ENCODE measurements at regions of chr21 and their contacts with region 1.

Region 1: DNA sequence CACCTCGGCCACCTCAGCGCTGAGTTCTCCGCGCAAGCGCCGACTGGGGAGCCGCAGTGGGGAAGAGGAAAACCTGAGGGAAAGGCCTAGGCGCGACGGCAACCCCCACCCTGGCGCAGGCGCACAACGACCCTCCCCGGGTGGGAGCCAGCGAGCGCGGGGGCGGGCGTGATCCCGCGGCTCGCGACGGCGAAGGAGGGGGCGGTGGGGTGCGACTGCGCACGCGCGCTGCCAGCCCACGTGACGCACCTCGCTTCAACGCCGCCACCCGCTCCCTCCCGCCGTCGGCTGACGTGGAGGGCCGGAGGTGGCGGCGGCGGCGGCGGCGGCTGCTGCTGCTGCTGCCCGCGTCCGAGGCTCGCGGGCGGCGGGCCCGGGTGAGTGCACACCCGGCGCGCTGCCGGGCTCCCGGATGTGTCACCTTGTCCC is at the starts of genes PIGP and TTC3:
- DNase-seq: peak; percentile 89 to 99 (median 95)
- ATAC-seq: peak; percentile 62
- H3K4me3 ChIP-seq: peak within 1 kb of the TSS; percentile 86 to 94
- H3K4me3 Mint-ChIP-seq: peak within 1 kb of the TSS; percentile 99
- H3K27ac ChIP-seq: peak within 1 kb of the TSS; percentile 96 to 98
- H3K27ac Mint-ChIP-seq: peak within 1 kb of the TSS; percentile 99
- H3K4me1 ChIP-seq: peaks cover 30% of the 10 kb centered on the region
- H3K4me1 Mint-ChIP-seq: peaks cover 57% of the 10 kb centered on the region
- H3K27me3 ChIP-seq: no peaks in the 10 kb centered on the region
- H3K27me3 Mint-ChIP-seq: no peaks in the 10 kb centered on the region
- CTCF ChIP-seq: no peak
- total RNA-seq, gene PIGP: 11.9 to 12.2 TPM
- total RNA-seq, gene TTC3: 137 to 141 TPM

Region 2: DNA sequence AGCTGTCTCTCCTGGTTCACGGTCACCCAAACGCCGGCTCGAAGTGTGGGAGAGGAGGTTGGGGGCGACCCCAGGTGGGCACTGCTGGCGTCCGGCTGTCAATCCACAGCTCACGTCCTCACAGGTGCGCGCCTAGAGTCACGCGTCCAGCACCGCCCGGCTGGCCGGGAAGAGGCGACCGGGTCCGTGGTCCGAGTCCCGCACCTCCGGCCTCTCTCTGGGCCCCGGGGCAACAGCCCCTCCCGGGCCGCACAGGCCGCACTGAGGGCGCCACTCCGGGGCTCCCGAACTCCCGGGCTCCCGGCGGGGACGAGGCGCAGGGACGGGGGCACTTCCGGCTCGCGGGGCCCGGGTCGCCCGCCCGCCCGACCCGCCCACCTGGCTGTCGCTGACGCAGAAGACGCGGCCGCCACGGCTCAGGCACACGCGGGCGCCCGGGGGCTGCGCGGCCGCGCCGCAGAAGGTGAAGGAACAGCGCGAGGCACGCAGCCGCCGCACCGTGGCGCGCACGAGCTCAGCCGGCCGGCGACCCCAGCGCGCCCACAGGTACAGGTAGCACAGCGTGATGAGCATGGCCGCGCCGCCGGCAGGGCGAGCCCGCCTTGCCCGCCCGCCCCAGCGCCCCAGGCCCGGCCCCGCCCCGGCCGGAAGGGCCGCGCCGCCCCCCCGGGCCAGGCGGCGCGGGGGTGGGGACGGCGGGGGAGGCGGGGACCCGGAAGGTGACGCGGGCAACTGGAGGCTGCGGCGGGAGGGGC is 106.8 kb before region 1 on chr21 and contains the start of gene HLCS:
- CTCF ChIA-PET with region 1: no interaction called
- POLR2A ChIA-PET with region 1: interaction called, 3 read pairs
- intact Hi-C with region 1: loop called (anchors 1 to 2 kb)
- DNase-seq: peak; percentile 43 to 90 (median 74)
- ATAC-seq: peak; percentile 90
- H3K4me3 ChIP-seq: peak within 1 kb of the TSS; percentile 65 to 66
- H3K4me3 Mint-ChIP-seq: peak within 1 kb of the TSS; percentile 85
- H3K27ac ChIP-seq: peak within 1 kb of the TSS; percentile 63 to 69
- H3K27ac Mint-ChIP-seq: peak within 1 kb of the TSS; percentile 90
- H3K4me1 ChIP-seq: peaks cover 10% of the 10 kb centered on the region
- H3K4me1 Mint-ChIP-seq: peaks cover 21% of the 10 kb centered on the region
- H3K27me3 ChIP-seq: no peaks in the 10 kb centered on the region
- H3K27me3 Mint-ChIP-seq: no peaks in the 10 kb centered on the region
- CTCF ChIP-seq: peak; percentile 36
- total RNA-seq, gene HLCS: 9.7 to 13.6 TPM

Region 3: DNA sequence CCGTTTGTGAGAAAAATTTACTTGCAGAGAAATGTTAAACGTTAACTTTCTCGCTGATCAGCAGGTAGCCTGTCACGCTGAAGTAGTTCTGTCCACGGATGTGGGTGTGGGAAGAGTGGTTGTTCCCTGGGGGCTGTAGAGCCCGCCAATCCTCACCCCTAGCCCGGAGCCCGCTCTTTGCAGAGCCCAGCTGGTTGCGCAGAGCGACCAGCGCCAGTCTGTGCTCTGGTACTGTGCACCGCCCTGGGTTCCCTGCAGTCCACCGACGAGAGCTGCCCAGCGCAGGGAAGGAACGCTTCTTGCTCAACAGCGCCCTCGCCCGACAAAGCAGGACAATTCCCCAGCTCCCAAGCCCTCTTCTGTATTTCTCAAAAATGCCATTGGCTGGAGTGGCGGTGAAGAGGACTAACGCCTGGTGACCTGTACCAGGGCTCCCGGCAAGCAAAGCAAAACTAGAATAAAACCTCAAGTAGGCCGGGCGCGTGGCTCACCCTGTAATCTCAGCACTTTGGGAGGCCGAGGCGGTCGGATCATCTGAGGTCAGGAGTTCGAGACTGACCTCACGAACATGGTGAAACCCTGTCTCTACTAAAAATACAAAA is 63.2 kb before region 1 on chr21:
- CTCF ChIA-PET with region 1: no interaction called
- POLR2A ChIA-PET with region 1: interaction called, 3 read pairs
- intact Hi-C with region 1: loop called in 1 of 2 experiments (anchors 5 kb)
- DNase-seq: peak; percentile 60 to 85 (median 80)
- ATAC-seq: peak; percentile 91
- H3K4me3 ChIP-seq: peak overlapping the region; percentile 7 to 37
- H3K4me3 Mint-ChIP-seq: peak overlapping the region; percentile 58
- H3K27ac ChIP-seq: no peak overlapping the region
- H3K27ac Mint-ChIP-seq: no peak overlapping the region
- H3K4me1 ChIP-seq: peaks cover 24% of the 10 kb centered on the region
- H3K4me1 Mint-ChIP-seq: peaks cover 16% of the 10 kb centered on the region
- H3K27me3 ChIP-seq: peaks cover 4 to 20% of the 10 kb centered on the region in 2 experiments
- H3K27me3 Mint-ChIP-seq: peaks cover 42% of the 10 kb centered on the region
- CTCF ChIP-seq: peak; percentile 85

Region 4: DNA sequence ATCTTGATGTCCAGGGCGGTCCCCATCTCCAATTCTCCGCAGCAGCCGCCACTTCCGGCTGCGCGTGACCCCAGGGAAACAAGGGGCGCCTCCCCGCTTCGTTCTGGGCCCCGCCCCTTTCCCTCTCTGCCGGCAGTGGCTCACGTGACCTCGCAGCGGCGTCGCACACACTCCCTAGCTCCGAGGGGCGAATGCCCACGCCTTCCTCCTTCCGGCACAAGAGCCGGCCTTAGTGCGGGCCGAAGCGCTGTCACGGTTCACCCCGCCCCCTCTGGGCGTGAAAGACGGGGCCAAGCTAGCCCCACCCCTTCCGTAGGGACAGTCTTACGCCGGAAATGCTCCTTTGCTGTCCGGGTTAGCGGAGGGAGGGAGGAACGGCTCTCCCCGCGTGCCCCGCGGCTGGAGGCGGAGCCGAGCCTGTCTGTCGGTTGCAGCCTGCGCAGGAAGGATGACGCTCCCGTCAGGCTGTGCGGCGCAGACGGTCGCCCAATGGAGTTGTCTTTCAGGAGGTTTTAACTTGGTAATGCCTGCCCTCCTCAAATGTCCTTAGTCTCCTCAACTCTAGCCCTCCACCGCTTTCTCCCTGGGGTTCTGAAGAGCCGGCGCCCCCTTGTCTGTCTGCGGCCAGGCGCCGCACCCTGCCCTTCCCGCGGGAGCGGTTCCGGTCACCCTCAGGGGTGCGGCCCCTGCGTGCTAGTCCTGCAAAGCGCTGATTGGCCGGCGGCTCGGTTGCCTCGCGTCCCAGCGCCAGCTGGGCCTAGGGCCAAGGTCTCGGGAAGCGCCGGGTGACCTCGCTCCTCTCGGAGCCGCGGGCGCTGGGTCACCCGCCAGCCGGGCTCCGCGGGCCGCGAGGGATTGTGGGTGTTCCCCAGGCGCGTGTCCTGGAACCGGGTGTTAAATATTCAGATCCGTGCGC is 194.5 kb after region 1 on chr21 and contains the start of gene VPS26C:
- CTCF ChIA-PET with region 1: no interaction called
- POLR2A ChIA-PET with region 1: no interaction called
- intact Hi-C with region 1: loop called (anchors 1 to 5 kb)
- DNase-seq: peak; percentile 96 to 100 (median 98)
- ATAC-seq: peak; percentile 84
- H3K4me3 ChIP-seq: peak within 1 kb of the TSS; percentile 71 to 97
- H3K4me3 Mint-ChIP-seq: peak within 1 kb of the TSS; percentile 96
- H3K27ac ChIP-seq: peak within 1 kb of the TSS; percentile 98 to 100
- H3K27ac Mint-ChIP-seq: peak within 1 kb of the TSS; percentile 98
- H3K4me1 ChIP-seq: peaks cover 20% of the 10 kb centered on the region
- H3K4me1 Mint-ChIP-seq: peaks cover 49% of the 10 kb centered on the region
- H3K27me3 ChIP-seq: no peaks in the 10 kb centered on the region
- H3K27me3 Mint-ChIP-seq: no peaks in the 10 kb centered on the region
- CTCF ChIP-seq: no peak
- total RNA-seq, gene VPS26C: 37.4 to 39.4 TPM